HepG2 (cell line): ENCODE measurements at regions of chr17 and their contacts with region 1.

Region 1: DNA sequence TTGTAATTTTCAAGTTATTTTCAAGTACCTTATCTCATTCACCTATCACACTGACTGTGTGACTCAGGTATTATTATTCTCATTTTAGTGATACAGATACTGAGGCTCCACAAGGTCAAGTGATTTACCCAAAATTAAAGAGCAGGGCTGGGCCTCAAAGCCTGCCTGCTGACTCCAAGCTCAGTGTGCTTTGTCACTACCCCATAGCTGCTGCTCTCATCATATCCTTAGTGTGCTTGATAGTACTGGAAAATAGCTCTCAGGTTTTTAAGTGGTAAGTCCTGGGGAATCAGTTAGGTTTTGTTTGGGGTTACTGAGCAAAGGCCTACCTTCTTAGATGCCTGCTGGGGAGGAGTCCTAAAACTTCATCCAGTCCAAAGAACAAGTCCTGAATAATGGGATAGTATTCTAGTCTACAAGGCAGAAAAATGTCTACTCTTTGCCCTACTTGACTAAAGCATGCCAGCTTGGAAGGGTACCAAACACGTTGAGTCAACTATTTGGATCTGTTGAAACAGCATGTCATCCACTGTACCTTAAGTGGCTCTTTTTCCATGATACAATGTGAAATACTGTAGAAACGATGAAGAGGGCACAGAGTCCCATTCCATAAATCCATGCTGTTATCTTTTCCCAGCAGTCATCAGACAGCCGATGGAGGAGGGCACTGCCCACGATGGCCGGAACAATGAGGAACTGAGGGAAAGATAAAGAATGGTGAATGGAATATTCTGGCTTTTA is 10.7 kb downstream of the MMD start:
- DNase-seq: peak; percentile 55
- ATAC-seq: no peak
- H3K4me3 ChIP-seq: no peak overlapping the region
- H3K27ac ChIP-seq: peak overlapping the region; percentile 87
- H3K4me1 ChIP-seq: peaks cover 100% of the 10 kb centered on the region
- H3K27me3 ChIP-seq: no peaks in the 10 kb centered on the region
- CTCF ChIP-seq: no peak
- EP300 ChIP-seq: 0 out of 4 replicates have a peak, but pooled peaks of 1 of the 2 experiments have one; percentile 31
- POLR2A ChIP-seq: no peak; a peak in 1 of 4 replicates
- RAD21 ChIP-seq: no peak

Region 2: DNA sequence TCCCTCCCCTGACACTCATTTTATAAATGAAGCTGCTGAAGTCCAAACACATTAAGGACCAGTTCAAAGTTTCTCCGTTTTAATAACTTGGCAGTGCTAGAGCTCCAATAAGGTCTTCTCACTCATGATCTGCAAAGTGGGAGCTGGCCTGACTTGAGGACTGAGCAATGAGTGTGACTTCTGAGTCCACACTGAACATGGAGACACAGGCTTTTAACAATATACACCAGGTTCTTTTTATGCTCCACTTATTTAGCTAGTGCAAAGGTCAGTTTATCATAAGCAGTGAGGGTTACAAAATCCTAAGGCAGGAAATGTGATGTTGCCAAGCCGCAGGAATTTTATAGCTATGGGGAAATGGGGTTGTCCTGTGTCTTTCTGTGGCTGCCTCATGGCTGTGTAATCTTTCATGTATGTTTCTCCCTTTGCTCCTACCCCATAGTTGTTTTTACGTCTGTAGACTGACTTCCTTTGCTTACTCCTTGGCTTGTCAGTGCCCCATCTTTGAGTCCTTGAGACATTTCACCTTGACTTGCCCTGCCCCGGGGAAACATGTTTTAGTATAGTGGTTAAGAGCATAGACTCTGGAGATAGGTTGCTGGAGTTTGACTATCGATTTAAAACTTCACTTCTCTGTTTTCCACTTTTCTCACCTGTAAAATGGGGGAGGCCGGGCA is 22.9 kb after region 1 on chr17:
- CTCF ChIA-PET with region 1: interaction called, 3 read pairs
- POLR2A ChIA-PET with region 1: interaction called, 55 read pairs
- in situ Hi-C with region 1: no loop called
- intact Hi-C with region 1: no loop called
- DNase-seq: peak; percentile 99
- ATAC-seq: peak; percentile 89
- H3K4me3 ChIP-seq: peak overlapping the region in 2 of 3 experiments; percentile 6 to 44; a peak in 2 of 6 replicates
- H3K27ac ChIP-seq: peak overlapping the region; percentile 92
- H3K4me1 ChIP-seq: peaks cover 80% of the 10 kb centered on the region
- H3K27me3 ChIP-seq: no peaks in the 10 kb centered on the region
- CTCF ChIP-seq: no peak
- EP300 ChIP-seq: peak; percentile 86 to 95; a peak in 3 of 4 replicates
- POLR2A ChIP-seq: peak; percentile 64 to 93
- RAD21 ChIP-seq: no peak

Region 3: GRCh38 chr17:55444471-55445441 is 33.9 kb after region 1 on chr17:
- CTCF ChIA-PET with region 1: no interaction called
- POLR2A ChIA-PET with region 1: interaction called, 38 read pairs
- in situ Hi-C with region 1: no loop called
- intact Hi-C with region 1: loop called (anchors 2 kb)
- DNase-seq: peak; percentile 91
- ATAC-seq: peak; percentile 63
- H3K4me3 ChIP-seq: peak overlapping the region in 1 of 3 experiments; percentile 24; a peak in 1 of 6 replicates
- H3K27ac ChIP-seq: peak overlapping the region; percentile 88
- H3K4me1 ChIP-seq: peaks cover 94% of the 10 kb centered on the region
- H3K27me3 ChIP-seq: no peaks in the 10 kb centered on the region
- CTCF ChIP-seq: 0 out of 2 replicates have a peak, but pooled peaks have one; percentile 5
- EP300 ChIP-seq: peak in 1 of 2 experiments; percentile 64; a peak in 2 of 4 replicates
- POLR2A ChIP-seq: peak in 1 of 2 experiments; percentile 30; a peak in 3 of 4 replicates
- RAD21 ChIP-seq: no peak

Region 4: GRCh38 chr17:55452139-55452790 is 41.4 kb after region 1 on chr17:
- CTCF ChIA-PET with region 1: no interaction called
- POLR2A ChIA-PET with region 1: interaction called, 38 read pairs
- in situ Hi-C with region 1: no loop called
- intact Hi-C with region 1: loop called (anchors 1 kb)
- DNase-seq: peak; percentile 85
- ATAC-seq: peak; percentile 64
- H3K4me3 ChIP-seq: no peak overlapping the region
- H3K27ac ChIP-seq: peak overlapping the region; percentile 58
- H3K4me1 ChIP-seq: peaks cover 94% of the 10 kb centered on the region
- H3K27me3 ChIP-seq: no peaks in the 10 kb centered on the region
- CTCF ChIP-seq: no peak
- EP300 ChIP-seq: peak in 1 of 2 experiments; percentile 63; a peak in 1 of 4 replicates
- POLR2A ChIP-seq: no peak
- RAD21 ChIP-seq: no peak